ENCODE measurements at regions of chr16 and their contacts with region 1.

Region 1: DNA sequence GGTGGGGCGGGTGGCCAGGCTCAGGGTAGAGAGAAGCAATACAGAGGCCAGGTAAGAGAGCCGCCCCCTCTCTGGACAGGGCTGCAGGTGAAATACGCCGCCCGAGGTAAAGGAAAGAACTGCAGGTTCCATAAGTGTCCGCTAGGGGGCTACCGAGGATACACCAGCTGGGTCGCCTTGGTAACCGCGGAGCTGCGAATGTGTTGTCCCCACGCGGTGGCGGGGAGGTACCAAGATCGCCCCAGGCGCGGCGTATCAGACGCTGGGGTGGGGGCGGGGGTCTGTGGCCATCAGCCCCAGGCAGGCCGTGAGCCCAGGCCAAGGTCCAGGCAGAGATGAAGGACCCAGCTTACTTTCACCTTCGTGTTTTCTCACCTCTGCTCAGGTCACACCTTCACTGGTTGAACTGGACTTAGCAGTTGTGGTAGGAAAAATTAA is 18.4 kb upstream of the ZFP90 start:
- DNase-seq: peak; percentile 78 to 93 (median 81)
- H3K4me3 ChIP-seq: peak overlapping the region; percentile 25
- H3K4me3 Mint-ChIP-seq: peak overlapping the region; percentile 38 to 72 (median 56)
- H3K27ac ChIP-seq: no peak overlapping the region
- H3K27ac Mint-ChIP-seq: peak overlapping the region in 7 of 8 donors; percentile 47 to 95 (median 62)
- H3K4me1 ChIP-seq: peaks cover 3% of the 10 kb centered on the region
- H3K4me1 Mint-ChIP-seq: peaks cover 7 to 9% (median 8%) of the 10 kb centered on the region in 3 donors
- H3K27me3 ChIP-seq: no peaks in the 10 kb centered on the region
- H3K27me3 Mint-ChIP-seq: peaks cover 0 to 9% of the 10 kb centered on the region in 2 donors

Region 2: GRCh38 chr16:68370581-68371275 is 149.9 kb before region 1 on chr16:
- CTCF ChIA-PET with region 1: interaction called, 10 read pairs
- POLR2A ChIA-PET with region 1: no interaction called
- DNase-seq: peak; percentile 18 to 72 (median 55)
- H3K4me3 ChIP-seq: no peak overlapping the region
- H3K4me3 Mint-ChIP-seq: peak overlapping the region in 6 of 7 donors; percentile 38 to 87 (median 61)
- H3K27ac ChIP-seq: no peak overlapping the region
- H3K27ac Mint-ChIP-seq: peak overlapping the region in 7 of 8 donors; percentile 26 to 86 (median 47)
- H3K4me1 ChIP-seq: peaks cover 39% of the 10 kb centered on the region
- H3K4me1 Mint-ChIP-seq: peaks cover 37 to 58% (median 41%) of the 10 kb centered on the region in 3 donors
- H3K27me3 ChIP-seq: peaks cover 4% of the 10 kb centered on the region
- H3K27me3 Mint-ChIP-seq: peaks cover 0 to 7% of the 10 kb centered on the region in 2 donors

Region 3: GRCh38 chr16:68538880-68539701 is 18.4 kb after region 1 on chr16 and contains the start of gene ZFP90:
- CTCF ChIA-PET with region 1: interaction called, 15 read pairs
- POLR2A ChIA-PET with region 1: no interaction called
- DNase-seq: peak; percentile 76 to 87 (median 83)
- H3K4me3 ChIP-seq: peak within 1 kb of the TSS; percentile 89
- H3K4me3 Mint-ChIP-seq: peak within 1 kb of the TSS; percentile 93 to 100 (median 99)
- H3K27ac ChIP-seq: peak within 1 kb of the TSS; percentile 80
- H3K27ac Mint-ChIP-seq: peak within 1 kb of the TSS; percentile 96 to 100 (median 100)
- H3K4me1 ChIP-seq: peaks cover 13% of the 10 kb centered on the region
- H3K4me1 Mint-ChIP-seq: peaks cover 22 to 34% (median 33%) of the 10 kb centered on the region in 3 donors
- H3K27me3 ChIP-seq: no peaks in the 10 kb centered on the region
- H3K27me3 Mint-ChIP-seq: no peaks in the 10 kb centered on the region
- total RNA-seq, gene ZFP90: 22.4 to 24.3 TPM

Region 4: GRCh38 chr16:68811503-68811902 is 290.8 kb after region 1 on chr16:
- CTCF ChIA-PET with region 1: no interaction called
- POLR2A ChIA-PET with region 1: no interaction called
- DNase-seq: no peak
- H3K4me3 ChIP-seq: no peak overlapping the region
- H3K4me3 Mint-ChIP-seq: no peak overlapping the region
- H3K27ac ChIP-seq: no peak overlapping the region
- H3K27ac Mint-ChIP-seq: no peak overlapping the region
- H3K4me1 ChIP-seq: no peaks in the 10 kb centered on the region
- H3K4me1 Mint-ChIP-seq: no peaks in the 10 kb centered on the region
- H3K27me3 ChIP-seq: no peaks in the 10 kb centered on the region
- H3K27me3 Mint-ChIP-seq: peaks cover 7 to 11% of the 10 kb centered on the region in 2 donors

Region 5: GRCh38 chr16:69132424-69133252 is 612.0 kb after region 1 on chr16 and contains the starts of genes CHTF8 and UTP4:
- CTCF ChIA-PET with region 1: no interaction called
- POLR2A ChIA-PET with region 1: interaction called, 13 read pairs
- DNase-seq: peak; percentile 80 to 89 (median 82)
- H3K4me3 ChIP-seq: peak within 1 kb of the TSS; percentile 96
- H3K4me3 Mint-ChIP-seq: peak within 1 kb of the TSS; percentile 91 to 99 (median 94)
- H3K27ac ChIP-seq: peak within 1 kb of the TSS; percentile 92
- H3K27ac Mint-ChIP-seq: peak within 1 kb of the TSS; percentile 93 to 99 (median 95)
- H3K4me1 ChIP-seq: peaks cover 33% of the 10 kb centered on the region
- H3K4me1 Mint-ChIP-seq: peaks cover 48 to 76% (median 71%) of the 10 kb centered on the region in 3 donors
- H3K27me3 ChIP-seq: no peaks in the 10 kb centered on the region
- H3K27me3 Mint-ChIP-seq: no peaks in the 10 kb centered on the region
- total RNA-seq, gene CHTF8: 141 to 149 TPM
- total RNA-seq, gene UTP4: 150 to 155 TPM

Measured in CD8-positive, alpha-beta memory T cell (primary cell).